ENCODE measurements at regions of chr1 and their contacts with region 1.

Region 1: DNA sequence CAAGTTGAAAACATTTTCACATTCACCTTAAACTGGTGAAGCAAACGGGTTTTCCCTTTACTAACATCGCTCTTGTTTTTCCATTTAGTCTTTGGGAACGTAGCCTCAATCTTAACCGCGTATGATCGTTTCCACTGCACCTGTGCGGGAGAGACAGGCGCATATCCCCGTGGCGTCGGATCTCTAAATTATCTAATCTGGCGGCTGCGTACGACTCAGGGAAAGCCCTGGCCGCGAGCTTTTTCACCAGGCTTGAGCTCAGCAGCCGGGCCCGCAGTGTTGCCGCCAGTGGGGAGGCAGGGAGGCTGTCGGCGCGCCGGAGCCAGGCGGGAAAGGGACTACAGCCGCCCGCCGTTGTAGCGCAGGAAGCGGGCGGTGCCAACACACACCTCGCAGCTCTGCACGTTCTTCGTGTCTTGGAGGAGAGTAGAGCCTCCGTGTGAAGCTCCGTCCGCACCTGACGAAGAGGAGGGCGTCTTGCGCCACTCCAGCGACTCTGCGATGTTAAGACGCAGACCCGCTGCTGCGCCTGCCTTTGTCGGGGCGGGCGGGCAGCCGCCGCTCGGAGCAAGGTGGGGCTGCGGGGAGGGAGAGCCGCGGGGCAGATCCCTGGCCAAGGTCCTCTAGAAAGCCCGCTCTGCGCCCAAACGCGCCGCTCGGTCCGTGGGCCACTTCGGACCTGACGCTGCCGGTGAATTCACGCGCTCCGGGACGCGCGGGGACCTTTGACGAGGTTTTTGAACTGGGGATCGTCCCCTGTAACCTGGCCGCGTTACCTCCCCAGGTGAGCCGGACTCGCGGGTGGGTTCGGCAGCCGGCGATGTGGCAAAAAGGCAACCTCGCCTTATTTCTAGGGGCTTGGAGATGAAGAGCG is 18.5 kb upstream of the TBX15 start:
- DNase-seq: no peak
- ATAC-seq: no peak

Region 2: DNA sequence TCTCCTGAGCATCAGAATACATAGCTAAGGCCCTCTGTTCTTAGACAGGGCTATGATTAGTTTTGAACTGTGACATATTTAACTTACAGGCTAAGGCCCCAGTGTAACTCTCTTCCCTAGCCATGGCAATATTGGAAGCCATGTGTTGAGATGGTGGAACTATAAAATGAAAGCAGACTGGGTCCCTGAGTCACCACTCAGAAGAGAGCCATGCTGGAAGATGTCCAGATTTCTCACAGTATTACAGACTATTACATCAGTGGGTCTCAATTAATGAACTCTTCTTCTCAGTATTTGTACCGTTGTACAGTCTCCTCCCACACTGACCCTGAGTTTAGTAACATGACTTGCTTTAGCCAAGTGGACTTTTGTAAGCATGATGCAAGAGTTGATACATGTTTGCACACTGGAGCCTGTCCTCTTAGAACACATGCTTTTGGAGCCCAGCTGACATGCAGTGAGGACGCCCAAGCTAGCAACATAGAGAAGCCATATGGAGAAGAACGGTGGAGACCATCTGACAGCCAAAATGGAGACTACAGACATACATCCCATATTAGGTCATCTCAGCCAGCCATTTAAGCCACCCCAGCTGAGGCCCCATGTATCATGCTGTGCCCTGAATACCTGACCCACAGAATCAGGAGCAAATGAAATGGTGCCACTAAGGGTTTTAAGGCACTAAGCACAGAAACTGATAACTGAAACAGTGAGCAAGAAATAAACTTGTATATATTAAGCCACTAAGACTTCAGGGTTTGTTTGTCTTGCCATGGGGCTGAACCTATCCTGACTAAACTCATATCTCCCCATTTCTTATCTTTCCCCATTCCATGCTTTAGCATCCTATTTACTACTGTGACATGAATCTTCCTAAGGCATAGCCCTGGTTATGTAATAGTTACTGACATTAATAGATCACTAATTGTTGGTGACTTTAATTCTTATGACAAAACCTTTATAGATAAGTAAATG is 42.9 kb before region 1 on chr1:
- intact Hi-C with region 1: loop called (anchors 1 kb)
- DNase-seq: no peak
- ATAC-seq: peak; percentile 89

Measured in sciatic nerve (tissue), 2 donors.